ENCODE measurements at regions of chr10 and their contacts with region 1.

Region 1: DNA sequence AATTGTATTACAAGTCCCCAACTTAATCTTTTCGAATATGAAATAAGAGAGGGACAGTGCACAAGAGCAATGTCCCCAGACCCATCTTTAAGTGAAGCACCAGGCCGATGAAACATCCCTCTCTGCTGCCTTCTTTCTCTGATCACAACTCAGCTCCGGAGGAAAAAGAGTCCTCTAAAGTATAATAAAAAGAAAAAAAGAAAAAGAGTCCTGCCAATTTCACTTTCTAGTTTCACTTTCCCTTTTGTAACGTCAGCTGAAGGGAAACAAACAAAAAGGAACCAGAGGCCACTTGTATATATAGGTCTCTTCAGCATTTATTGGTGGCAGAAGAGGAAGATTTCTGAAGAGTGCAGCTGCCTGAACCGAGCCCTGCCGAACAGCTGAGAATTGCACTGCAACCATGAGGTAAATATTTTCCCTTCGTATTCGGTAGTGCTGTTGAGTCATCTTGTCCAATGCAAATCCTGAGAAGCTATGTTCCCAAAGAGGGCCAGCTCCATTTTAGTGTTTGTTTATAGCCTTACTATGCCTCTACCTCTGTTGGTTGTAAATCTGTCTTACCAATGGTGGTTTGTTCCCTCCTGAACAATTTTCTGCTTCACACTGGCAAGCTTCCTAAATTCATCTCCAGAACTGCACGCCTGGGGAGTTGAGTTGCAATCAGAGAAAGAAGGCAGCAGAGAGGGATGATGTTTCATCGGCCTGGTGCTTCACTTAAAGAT is at the start of gene IFIT2:
- DNase-seq: peak; percentile 68 to 80 (median 77)
- H3K4me3 ChIP-seq: peak within 1 kb of the TSS; percentile 60 to 95 (median 84)
- H3K4me3 Mint-ChIP-seq: peak within 1 kb of the TSS; percentile 82 to 95
- H3K27ac ChIP-seq: peak within 1 kb of the TSS; percentile 69 to 97
- H3K27ac Mint-ChIP-seq: peak within 1 kb of the TSS; percentile 94 to 99 (median 97)
- H3K4me1 ChIP-seq: peaks cover 48 to 52% of the 10 kb centered on the region in 2 donors
- H3K4me1 Mint-ChIP-seq: peaks cover 49% of the 10 kb centered on the region
- H3K27me3 ChIP-seq: no peaks in the 10 kb centered on the region
- H3K27me3 Mint-ChIP-seq: peaks cover 0 to 3% (median 0%) of the 10 kb centered on the region in 3 donors
- CTCF ChIP-seq: no peak
- polyA plus RNA-seq, gene IFIT2: 9.7 to 25.2 (median 15.5) TPM

Region 2: GRCh38 chr10:89257581-89257980 is 44.3 kb before region 1 on chr10:
- intact Hi-C with region 1: loop called in 1 of 2 experiments (anchors 5 kb)
- DNase-seq: no peak
- H3K4me3 ChIP-seq: no peak overlapping the region
- H3K4me3 Mint-ChIP-seq: no peak overlapping the region
- H3K27ac ChIP-seq: no peak overlapping the region
- H3K27ac Mint-ChIP-seq: peak overlapping the region in 1 of 7 donors; percentile 13
- H3K4me1 ChIP-seq: peaks cover 38 to 48% of the 10 kb centered on the region in 2 donors
- H3K4me1 Mint-ChIP-seq: peaks cover 34% of the 10 kb centered on the region
- H3K27me3 ChIP-seq: no peaks in the 10 kb centered on the region
- H3K27me3 Mint-ChIP-seq: no peaks in the 10 kb centered on the region
- CTCF ChIP-seq: no peak

Region 3: DNA sequence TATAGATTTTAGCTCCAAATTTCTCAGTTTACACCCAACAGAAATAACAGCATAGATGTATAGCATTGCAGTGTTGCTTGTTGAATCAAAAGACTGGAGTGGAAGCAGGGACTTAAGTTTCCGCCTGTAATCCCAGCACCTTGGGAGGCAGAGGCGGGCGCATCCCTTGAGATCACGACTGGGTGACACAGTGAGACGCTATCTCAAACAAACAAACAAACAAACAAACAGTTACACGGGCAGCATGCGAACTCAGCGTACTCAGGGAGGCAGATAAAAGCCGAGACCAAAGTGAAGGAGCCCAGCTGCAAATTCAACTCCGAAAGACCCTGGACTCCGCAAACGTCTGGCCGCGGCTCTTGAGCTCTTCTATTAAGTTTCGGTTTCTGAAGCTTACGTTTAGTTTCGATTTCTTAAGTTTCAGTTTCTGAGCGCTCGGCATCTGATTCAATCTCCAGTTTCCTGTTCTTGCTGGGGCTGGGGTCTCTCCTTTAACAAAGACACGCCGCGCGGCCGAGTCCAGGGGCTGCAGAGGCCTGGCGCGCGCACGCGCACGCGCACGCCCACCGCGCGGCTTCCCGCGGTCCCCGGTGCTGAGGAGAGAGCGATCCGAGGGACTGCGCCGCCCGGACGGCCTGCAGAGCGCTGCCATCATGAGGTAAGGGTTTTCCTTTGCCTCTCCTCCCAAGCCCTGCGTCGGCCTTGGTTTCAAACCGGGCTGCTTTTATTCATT is 112.4 kb after region 1 on chr10 and contains the start of gene IFIT5:
- intact Hi-C with region 1: loop called in 1 of 2 experiments (anchors 10 kb)
- DNase-seq: peak; percentile 58 to 74 (median 69)
- H3K4me3 ChIP-seq: peak within 1 kb of the TSS; percentile 71 to 95 (median 72)
- H3K4me3 Mint-ChIP-seq: peak within 1 kb of the TSS; percentile 89 to 99
- H3K27ac ChIP-seq: peak within 1 kb of the TSS; percentile 89 to 94
- H3K27ac Mint-ChIP-seq: peak within 1 kb of the TSS; percentile 94 to 99 (median 96)
- H3K4me1 ChIP-seq: peaks cover 29 to 36% of the 10 kb centered on the region in 2 donors
- H3K4me1 Mint-ChIP-seq: peaks cover 53% of the 10 kb centered on the region
- H3K27me3 ChIP-seq: no peaks in the 10 kb centered on the region
- H3K27me3 Mint-ChIP-seq: peaks cover 0 to 8% (median 0%) of the 10 kb centered on the region in 3 donors
- CTCF ChIP-seq: no peak
- polyA plus RNA-seq, gene IFIT5: 2.4 to 8.0 (median 5.8) TPM